Sciatic nerve (tissue), 2 donors: ENCODE measurements at regions of chr3 and their contacts with region 1.

Region 1: DNA sequence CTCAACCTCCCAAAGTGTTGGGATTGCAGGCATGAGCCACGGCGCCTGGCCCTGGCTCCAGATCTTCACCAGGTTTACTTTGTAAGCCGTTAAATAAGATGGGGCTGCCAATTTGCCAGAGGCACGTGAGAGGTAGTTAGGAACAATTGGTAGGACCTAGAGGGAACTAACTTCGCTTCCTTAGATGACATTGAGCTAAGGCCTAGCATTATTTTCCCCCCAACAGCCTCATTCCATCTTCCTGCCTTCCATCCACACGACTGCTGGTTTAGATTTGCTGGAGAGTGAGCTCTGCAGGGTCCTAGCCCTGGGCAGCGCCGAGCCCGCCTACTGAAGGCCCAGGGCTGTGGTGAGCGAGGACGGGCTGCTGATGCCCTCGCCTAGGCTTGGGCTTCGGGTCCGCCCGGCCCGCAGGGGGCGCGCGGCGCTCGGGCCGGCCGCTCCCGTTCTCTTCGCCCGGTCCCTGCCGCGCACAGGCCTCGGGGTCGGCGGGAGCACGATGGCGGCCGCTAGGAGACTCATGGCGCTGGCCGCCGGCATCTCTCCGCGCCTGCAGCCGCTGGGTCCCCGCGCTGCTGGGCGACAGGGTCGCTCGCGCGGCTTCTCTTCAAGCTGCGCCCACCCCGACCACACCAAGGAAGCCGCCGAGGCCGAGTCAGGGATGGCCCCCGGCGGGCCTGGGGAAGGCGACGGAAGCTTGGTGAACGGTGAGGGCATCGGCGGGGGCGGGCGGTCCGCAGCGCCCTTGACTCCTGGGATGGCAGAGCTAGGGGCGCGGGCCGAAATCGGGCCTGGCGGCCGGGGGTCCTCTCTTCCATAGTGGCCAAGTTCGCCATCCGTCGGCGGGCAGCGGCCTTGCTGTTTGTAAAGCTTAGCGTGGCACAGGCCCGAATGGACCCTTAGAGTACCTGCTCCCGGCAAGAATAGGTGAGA is 21.9 kb downstream of the DHX30 start:
- DNase-seq: peak; percentile 83
- ATAC-seq: peak; percentile 97

Region 2: DNA sequence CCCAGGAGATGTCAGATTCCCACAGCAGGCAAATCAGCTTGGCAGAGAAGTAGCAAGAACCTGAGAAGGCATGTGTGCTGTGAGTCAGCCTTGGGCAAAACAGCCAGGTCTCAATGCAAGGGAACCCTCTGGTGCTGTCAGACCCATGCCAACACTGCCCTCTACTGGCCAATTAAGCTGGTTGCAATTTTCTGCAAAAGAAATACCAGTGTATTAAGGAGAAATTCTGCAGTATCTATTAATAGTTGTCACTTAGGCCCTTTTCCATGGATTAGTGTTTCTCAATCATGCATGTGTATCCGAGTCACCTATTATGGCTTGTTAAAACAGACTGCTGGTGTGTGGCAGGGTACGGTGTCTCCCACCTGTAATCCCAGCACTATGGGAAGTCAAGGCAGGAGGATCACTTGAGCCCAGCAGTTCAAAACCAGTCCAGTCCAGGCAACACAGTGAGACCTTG is 165.2 kb after region 1 on chr3:
- intact Hi-C with region 1: loop called (anchors 10 kb)
- DNase-seq: peak; percentile 79
- ATAC-seq: peak; percentile 95

Region 3: DNA sequence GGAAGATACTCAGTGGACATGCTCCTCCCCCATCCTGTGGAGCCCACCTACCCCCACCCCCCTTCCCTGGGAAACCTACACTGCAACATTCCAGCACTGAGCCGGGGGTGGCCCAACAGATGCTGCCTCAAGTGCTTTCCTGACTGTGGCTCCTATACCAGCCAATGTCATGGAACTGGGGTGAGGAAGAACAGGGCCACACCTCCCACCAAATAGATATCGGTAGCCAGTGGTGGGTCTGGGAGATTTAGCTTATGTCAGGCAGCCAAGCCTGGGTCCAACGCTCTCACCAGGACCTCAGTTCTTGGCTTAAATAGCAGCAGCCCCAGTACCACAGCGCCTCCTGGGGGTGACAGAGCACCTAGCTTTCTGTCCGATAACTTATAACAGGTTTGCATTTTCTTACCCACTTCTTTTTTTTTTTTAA is 333.2 kb after region 1 on chr3:
- intact Hi-C with region 1: loop called (anchors 1 kb)
- DNase-seq: peak; percentile 84
- ATAC-seq: peak; percentile 68